Ovary (tissue), 10 donors: ENCODE measurements at regions of chr5 and their contacts with region 1.

Region 1: DNA sequence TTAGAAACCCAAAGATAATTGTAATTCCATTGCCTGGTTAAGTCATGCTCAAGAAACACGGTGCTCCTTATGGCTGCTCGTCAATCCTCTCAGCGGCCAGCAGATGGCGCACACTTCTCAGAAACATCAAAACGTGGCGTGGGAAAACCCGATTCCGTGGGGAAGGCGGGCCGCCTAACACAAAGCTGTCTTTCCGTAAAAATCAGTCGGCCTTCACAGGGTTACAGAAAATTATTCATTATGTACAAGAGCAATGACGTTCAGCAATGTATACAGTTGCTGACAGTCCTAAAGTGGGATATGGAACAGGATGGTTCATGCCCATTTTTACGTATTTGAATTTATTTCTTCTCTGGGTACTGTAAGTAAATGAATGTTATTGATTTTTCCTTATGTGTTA is 83.5 kb downstream of the PDE4D start:
- DNase-seq: peak; percentile 33 to 76 (median 69)
- H3K4me3 ChIP-seq: no peak overlapping the region
- H3K27ac ChIP-seq: no peak overlapping the region
- H3K4me1 ChIP-seq: no peaks in the 10 kb centered on the region
- H3K27me3 ChIP-seq: no peaks in the 10 kb centered on the region
- CTCF ChIP-seq: peak; percentile 29 to 55 (median 46)
- EP300 ChIP-seq: no peak
- POLR2A ChIP-seq: no peak

Region 2: GRCh38 chr5:60668686-60669304 is 858.8 kb after region 1 on chr5:
- intact Hi-C with region 1: loop called in 1 of 4 experiments (anchors 5 kb)
- DNase-seq: no peak
- H3K4me3 ChIP-seq: no peak overlapping the region
- H3K27ac ChIP-seq: no peak overlapping the region
- H3K4me1 ChIP-seq: no peaks in the 10 kb centered on the region
- H3K27me3 ChIP-seq: no peaks in the 10 kb centered on the region
- CTCF ChIP-seq: no peak
- EP300 ChIP-seq: no peak
- POLR2A ChIP-seq: no peak